Naive thymus-derived CD8-positive, alpha-beta T cell (primary cell): ENCODE measurements at regions of chrX and their contacts with region 1.

Region 1: GRCh38 chrX:54439967-54440871 is at the start of gene TSR2:
- DNase-seq: peak; percentile 61 to 86 (median 74)
- ATAC-seq: peak; percentile 96 to 97
- H3K4me3 Mint-ChIP-seq: peak within 1 kb of the TSS; percentile 89 to 99 (median 92)
- H3K27ac Mint-ChIP-seq: peak within 1 kb of the TSS; percentile 89 to 95 (median 94)
- H3K4me1 Mint-ChIP-seq: peaks cover 16 to 46% (median 35%) of the 10 kb centered on the region in 4 donors
- H3K27me3 Mint-ChIP-seq: no peaks in the 10 kb centered on the region
- polyA plus RNA-seq, gene TSR2: 65.8 to 83.4 (median 66.4) TPM

Region 2: GRCh38 chrX:54320070-54320469 is 120.1 kb before region 1 on chrX:
- POLR2A ChIA-PET with region 1: no interaction called
- DNase-seq: no peak
- ATAC-seq: no peak
- H3K4me3 Mint-ChIP-seq: no peak overlapping the region
- H3K27ac Mint-ChIP-seq: no peak overlapping the region
- H3K4me1 Mint-ChIP-seq: no peaks in the 10 kb centered on the region
- H3K27me3 Mint-ChIP-seq: peaks cover 0 to 1% (median 0%) of the 10 kb centered on the region in 5 donors

Region 3: GRCh38 chrX:54423161-54423888 is 16.9 kb before region 1 on chrX:
- POLR2A ChIA-PET with region 1: no interaction called
- DNase-seq: no peak
- ATAC-seq: no peak
- H3K4me3 Mint-ChIP-seq: no peak overlapping the region
- H3K27ac Mint-ChIP-seq: no peak overlapping the region
- H3K4me1 Mint-ChIP-seq: no peaks in the 10 kb centered on the region
- H3K27me3 Mint-ChIP-seq: peaks cover 0 to 15% (median 7%) of the 10 kb centered on the region in 5 donors

Region 4: GRCh38 chrX:54529552-54530357 is 89.5 kb after region 1 on chrX and contains the start of gene GNL3L:
- POLR2A ChIA-PET with region 1: interaction called, 13 read pairs
- DNase-seq: peak; percentile 68 to 90 (median 76)
- ATAC-seq: peak; percentile 89 to 90
- H3K4me3 Mint-ChIP-seq: peak within 1 kb of the TSS; percentile 88 to 96 (median 94)
- H3K27ac Mint-ChIP-seq: peak within 1 kb of the TSS; percentile 90 to 98 (median 97)
- H3K4me1 Mint-ChIP-seq: peaks cover 14 to 41% (median 34%) of the 10 kb centered on the region in 4 donors
- H3K27me3 Mint-ChIP-seq: no peaks in the 10 kb centered on the region
- polyA plus RNA-seq, gene GNL3L: 22.5 to 43.1 (median 33.3) TPM